B cell (primary cell): ENCODE measurements at regions of chr2 and their contacts with region 1.

Region 1: GRCh38 chr2:203301667-203302066 is 26.5 kb upstream of the ABI2 start:
- DNase-seq: no peak
- ATAC-seq: no peak
- H3K4me3 ChIP-seq: no peak overlapping the region
- H3K4me3 Mint-ChIP-seq: no peak overlapping the region
- H3K27ac ChIP-seq: no peak overlapping the region
- H3K27ac Mint-ChIP-seq: no peak overlapping the region
- H3K4me1 ChIP-seq: no peaks in the 10 kb centered on the region
- H3K4me1 Mint-ChIP-seq: no peaks in the 10 kb centered on the region
- H3K27me3 ChIP-seq: no peaks in the 10 kb centered on the region
- H3K27me3 Mint-ChIP-seq: no peaks in the 10 kb centered on the region
- CTCF ChIP-seq: no peak

Region 2: DNA sequence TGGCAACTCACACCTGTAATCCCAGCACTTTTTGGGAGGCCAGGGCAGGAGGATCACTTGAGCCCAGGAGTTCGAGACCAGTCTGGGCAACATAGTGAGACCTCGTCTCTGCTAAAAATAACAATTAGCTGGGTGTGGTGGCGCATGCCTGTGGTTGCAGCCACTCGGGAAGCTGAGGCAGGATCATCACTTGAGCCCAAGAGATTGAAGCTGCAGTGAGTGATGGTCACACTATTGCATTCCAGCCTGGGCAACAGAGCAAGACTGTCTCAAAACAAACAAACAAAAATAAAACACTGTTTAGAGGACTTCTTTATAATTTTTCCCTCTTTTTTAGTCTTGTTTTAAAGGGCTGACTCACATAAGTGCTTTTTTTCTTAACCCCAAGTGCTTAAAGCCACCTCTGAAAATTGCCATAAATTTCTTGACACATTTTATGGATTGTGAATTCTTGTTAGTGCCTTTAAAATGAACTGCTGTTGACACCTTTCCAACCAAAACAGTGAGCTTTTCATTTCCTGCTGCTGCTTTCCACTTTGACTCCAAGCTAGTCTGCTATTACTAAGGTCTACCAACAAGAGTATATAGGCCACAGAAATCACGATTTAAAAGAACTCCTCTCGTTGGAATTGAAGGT is 21.1 kb before region 1 on chr2:
- CTCF ChIA-PET with region 1: no interaction called
- POLR2A ChIA-PET with region 1: interaction called, 11 read pairs
- intact Hi-C with region 1: no loop called
- DNase-seq: no peak
- ATAC-seq: no peak
- H3K4me3 ChIP-seq: no peak overlapping the region
- H3K4me3 Mint-ChIP-seq: no peak overlapping the region
- H3K27ac ChIP-seq: no peak overlapping the region
- H3K27ac Mint-ChIP-seq: no peak overlapping the region
- H3K4me1 ChIP-seq: no peaks in the 10 kb centered on the region
- H3K4me1 Mint-ChIP-seq: no peaks in the 10 kb centered on the region
- H3K27me3 ChIP-seq: no peaks in the 10 kb centered on the region
- H3K27me3 Mint-ChIP-seq: no peaks in the 10 kb centered on the region
- CTCF ChIP-seq: no peak